Right ventricle myocardium inferior (tissue), 1 donor: ENCODE measurements at regions of chr1 and their contacts with region 1.

Region 1: GRCh38 chr1:165452336-165453130 is 7.6 kb upstream of the RXRG start:
- DNase-seq: no peak
- ATAC-seq: peak; percentile 91

Region 2: GRCh38 chr1:165025805-165026204 is 426.7 kb before region 1 on chr1:
- intact Hi-C with region 1: no loop called
- DNase-seq: no peak
- ATAC-seq: no peak

Region 3: GRCh38 chr1:165288350-165289148 is 164.0 kb before region 1 on chr1:
- intact Hi-C with region 1: no loop called
- DNase-seq: peak; percentile 61
- ATAC-seq: no peak

Region 4: GRCh38 chr1:165317612-165318011 is 134.9 kb before region 1 on chr1:
- intact Hi-C with region 1: no loop called
- DNase-seq: no peak
- ATAC-seq: no peak

Region 5: GRCh38 chr1:165409657-165410358 is 42.7 kb before region 1 on chr1:
- intact Hi-C with region 1: loop called (anchors 5 kb)
- DNase-seq: no peak
- ATAC-seq: peak; percentile 94

Region 6: GRCh38 chr1:165543532-165544495 is 91.3 kb after region 1 on chr1 and contains the start of gene LRRC52:
- intact Hi-C with region 1: loop called (anchors 5 kb)
- DNase-seq: peak; percentile 82
- ATAC-seq: peak; percentile 80
- total RNA-seq, gene LRRC52: 0.30 TPM

Region 7: DNA sequence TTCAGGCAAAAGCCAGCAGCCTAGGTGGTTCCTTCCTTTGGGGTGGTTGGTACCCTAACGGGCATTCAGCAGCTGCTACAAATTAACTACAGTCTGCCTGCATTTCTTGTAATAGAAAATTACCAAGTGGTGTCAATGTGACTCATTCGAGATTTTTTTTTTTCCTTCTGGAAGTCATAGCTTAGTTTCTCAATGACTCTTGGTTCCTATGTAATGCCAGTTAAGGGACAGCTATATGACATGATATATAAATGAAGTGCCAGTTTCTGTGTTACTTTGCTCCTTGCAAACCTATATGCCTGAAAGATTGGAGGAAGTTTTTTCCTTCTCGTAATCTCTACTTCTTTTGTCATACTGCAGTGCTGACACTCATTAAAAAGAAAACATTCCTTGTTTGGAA is 181.1 kb after region 1 on chr1:
- intact Hi-C with region 1: no loop called
- DNase-seq: no peak
- ATAC-seq: no peak